Sigmoid colon (tissue), 7 donors: ENCODE measurements at regions of chr2 and their contacts with region 1.

Region 1: DNA sequence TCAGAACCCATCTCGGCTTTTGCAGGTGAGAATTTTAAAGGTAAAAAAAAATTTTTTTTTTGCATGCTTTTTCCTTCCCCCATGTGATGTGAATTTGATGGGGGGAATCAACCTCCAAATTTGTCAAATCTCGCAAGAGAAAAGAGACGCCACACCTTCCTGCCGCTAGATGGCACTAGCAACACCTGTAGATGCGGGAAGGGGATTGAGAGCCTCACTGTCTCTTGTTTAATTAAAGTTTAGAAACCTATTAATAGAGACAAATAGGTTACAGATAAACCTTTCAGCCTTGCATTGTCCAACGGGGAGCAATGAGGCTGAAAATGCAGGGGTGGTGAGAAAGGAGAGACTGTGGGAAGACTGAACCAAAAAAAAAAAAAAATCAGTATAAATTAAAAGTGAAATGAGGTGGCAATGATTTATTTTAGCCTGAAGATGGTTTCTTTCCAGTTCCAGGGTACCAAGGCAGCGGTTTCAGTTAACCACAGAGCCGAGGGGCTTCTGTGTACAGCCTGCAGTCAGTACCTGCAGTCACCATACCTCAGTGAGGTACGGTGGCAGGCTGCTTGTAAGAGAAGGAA is 84.6 kb downstream of the NRP2 start:
- DNase-seq: peak; percentile 89
- H3K4me3 ChIP-seq: no peak overlapping the region
- H3K27ac ChIP-seq: peak overlapping the region; percentile 86 to 99 (median 94)
- H3K4me1 ChIP-seq: peaks cover 0 to 98% (median 94%) of the 10 kb centered on the region in 4 donors
- H3K27me3 ChIP-seq: no peaks in the 10 kb centered on the region
- CTCF ChIP-seq: peak; percentile 82 to 92 (median 88)
- EP300 ChIP-seq: no peak
- POLR2A ChIP-seq: no peak

Region 2: GRCh38 chr2:205792908-205793307 is 26.0 kb after region 1 on chr2:
- intact Hi-C with region 1: loop called (anchors 1 kb)
- DNase-seq: peak; percentile 87
- H3K4me3 ChIP-seq: no peak overlapping the region
- H3K27ac ChIP-seq: peak overlapping the region; percentile 83 to 99 (median 90)
- H3K4me1 ChIP-seq: peaks cover 0 to 81% (median 65%) of the 10 kb centered on the region in 4 donors
- H3K27me3 ChIP-seq: no peaks in the 10 kb centered on the region
- CTCF ChIP-seq: no peak
- EP300 ChIP-seq: peak; percentile 71 to 89 (median 85)
- POLR2A ChIP-seq: no peak

Region 3: DNA sequence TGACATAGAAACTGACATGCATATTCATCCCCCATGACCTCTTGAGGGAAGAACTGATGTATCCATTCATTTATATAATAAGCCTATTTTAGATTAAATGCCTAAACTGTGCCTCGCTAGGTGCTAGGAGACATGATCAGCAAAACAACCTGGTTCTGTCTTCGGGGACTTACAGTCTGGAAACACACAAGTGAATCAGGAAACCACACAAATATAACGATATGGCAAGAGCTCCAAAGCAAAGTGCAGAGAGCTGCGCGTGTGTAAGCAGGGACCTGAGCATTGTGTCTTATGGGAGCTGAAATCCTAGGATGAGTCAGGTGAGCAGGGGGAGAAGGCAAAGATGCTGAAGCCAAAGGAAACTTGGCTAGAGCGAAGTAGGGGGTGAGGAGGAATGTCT is 36.1 kb after region 1 on chr2:
- intact Hi-C with region 1: no loop called
- DNase-seq: no peak
- H3K4me3 ChIP-seq: no peak overlapping the region
- H3K27ac ChIP-seq: peak overlapping the region; percentile 83 to 99 (median 90)
- H3K4me1 ChIP-seq: peaks cover 0 to 55% (median 47%) of the 10 kb centered on the region in 4 donors
- H3K27me3 ChIP-seq: no peaks in the 10 kb centered on the region
- CTCF ChIP-seq: no peak
- EP300 ChIP-seq: no peak
- POLR2A ChIP-seq: no peak

Region 4: DNA sequence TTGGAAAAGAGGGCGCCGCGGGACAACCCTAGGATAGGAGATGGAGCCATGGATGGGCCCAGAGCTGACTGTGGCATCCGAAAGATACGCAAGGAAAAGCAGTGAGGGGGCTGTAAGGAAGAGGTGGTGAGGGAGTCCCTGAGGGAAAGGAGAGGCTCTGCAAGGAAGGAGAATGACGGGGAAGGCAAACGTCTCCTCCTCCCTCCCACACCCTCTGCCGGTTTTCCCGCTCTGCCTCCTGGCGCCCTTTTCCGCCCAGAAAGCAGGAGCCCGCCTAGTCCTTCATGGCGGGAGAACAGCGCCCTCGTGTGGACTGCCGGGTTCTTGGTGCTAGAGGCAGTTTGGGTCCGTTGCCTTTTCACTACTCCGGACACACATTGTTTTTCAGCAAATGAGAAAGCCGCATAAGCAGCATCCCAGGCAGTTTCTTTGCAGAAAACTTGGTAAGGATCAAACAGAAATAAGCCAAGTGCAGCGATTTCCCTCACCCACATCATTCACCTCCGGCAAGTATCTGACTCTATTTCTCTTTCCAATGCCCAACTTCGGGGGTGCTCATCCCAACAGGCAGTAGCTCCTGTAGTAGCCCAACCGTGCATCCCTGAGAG is 118.7 kb after region 1 on chr2:
- intact Hi-C with region 1: loop called (anchors 1 kb)
- DNase-seq: peak; percentile 95
- H3K4me3 ChIP-seq: no peak overlapping the region
- H3K27ac ChIP-seq: peak overlapping the region in 3 of 4 donors; percentile 70 to 80 (median 72)
- H3K4me1 ChIP-seq: peaks cover 0 to 34% (median 18%) of the 10 kb centered on the region in 4 donors
- H3K27me3 ChIP-seq: no peaks in the 10 kb centered on the region
- CTCF ChIP-seq: peak; percentile 91 to 98 (median 94)
- EP300 ChIP-seq: no peak
- POLR2A ChIP-seq: no peak

Region 5: DNA sequence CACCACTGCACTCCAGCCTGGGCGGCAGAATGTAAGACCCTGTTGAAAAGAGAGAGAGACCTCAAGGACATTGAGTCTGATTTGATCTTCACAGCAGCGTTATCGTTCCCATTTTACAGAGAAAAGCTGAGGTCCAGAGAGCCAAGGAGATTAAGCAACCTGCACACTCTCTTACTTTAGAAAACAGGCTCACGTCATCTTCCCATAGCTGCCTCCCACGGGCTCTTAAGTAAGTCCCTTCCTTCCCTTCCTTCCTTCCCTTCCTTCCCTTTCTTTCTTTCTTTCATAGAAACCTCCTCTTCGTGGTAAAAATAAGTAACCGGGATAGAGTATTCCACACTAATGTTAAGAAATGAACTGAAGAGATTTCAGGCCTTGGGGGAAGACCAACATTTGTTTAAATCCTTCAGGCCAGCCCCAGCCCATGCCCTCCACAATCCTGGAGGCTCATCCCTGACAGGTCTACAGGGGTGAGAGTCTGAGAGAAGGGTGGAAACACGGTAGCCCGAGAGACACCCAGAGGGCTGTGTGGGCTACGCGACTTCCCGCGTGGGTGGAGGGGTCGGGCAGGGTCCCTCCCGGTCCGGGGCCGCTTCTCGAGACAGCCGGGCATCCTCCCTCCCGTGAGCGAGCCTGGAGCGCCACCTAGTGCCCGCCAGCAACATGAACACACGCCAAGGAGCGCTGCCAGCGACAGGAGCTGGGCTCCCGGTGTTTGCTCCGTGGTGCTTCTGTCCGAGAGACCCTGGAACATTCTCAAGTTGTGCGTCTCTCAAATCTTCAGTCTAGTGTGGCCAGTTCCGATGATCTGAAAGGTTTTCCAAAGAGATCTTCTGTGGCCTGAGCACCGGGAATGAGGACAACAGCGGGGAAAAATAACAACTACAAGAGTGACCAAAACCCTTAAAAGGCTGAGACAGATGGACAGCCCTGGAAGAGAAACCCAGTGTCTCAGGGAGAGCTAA is 158.8 kb after region 1 on chr2:
- intact Hi-C with region 1: loop called (anchors 5 kb)
- DNase-seq: peak; percentile 92
- H3K4me3 ChIP-seq: peak overlapping the region in 3 of 4 donors; percentile 26 to 41 (median 35)
- H3K27ac ChIP-seq: peak overlapping the region in 3 of 4 donors; percentile 53 to 69 (median 58)
- H3K4me1 ChIP-seq: peaks cover 0 to 18% (median 11%) of the 10 kb centered on the region in 4 donors
- H3K27me3 ChIP-seq: no peaks in the 10 kb centered on the region
- CTCF ChIP-seq: peak; percentile 89 to 96 (median 94)
- EP300 ChIP-seq: no peak
- POLR2A ChIP-seq: no peak